ENCODE measurements at regions of chr7 and their contacts with region 1.

Region 1: GRCh38 chr7:106461993-106462859 is 177.4 kb upstream of the NAMPT start:
- DNase-seq: no peak
- ATAC-seq: peak; percentile 67
- H3K4me3 ChIP-seq: no peak overlapping the region
- H3K27ac ChIP-seq: no peak overlapping the region
- H3K4me1 ChIP-seq: peaks cover 11 to 26% of the 10 kb centered on the region in 2 experiments; a peak in 3 of 4 replicates
- H3K27me3 ChIP-seq: no peaks in the 10 kb centered on the region
- CTCF ChIP-seq: peak; percentile 32 to 77 (median 60); a peak in 4 of 6 replicates
- POLR2A ChIP-seq: no peak
- RAD21 ChIP-seq: peak; percentile 84

Region 2: GRCh38 chr7:106285051-106285854 is 177.0 kb before region 1 on chr7:
- CTCF ChIA-PET with region 1: interaction called, 3 read pairs
- POLR2A ChIA-PET with region 1: interaction called, 5 read pairs
- RAD21 ChIA-PET with region 1: interaction called in 1 of 2 experiments, 4 read pairs
- intact Hi-C with region 1: loop called (anchors 5 kb)
- DNase-seq: peak; percentile 96
- ATAC-seq: peak; percentile 88
- H3K4me3 ChIP-seq: peak overlapping the region; percentile 77 to 83
- H3K27ac ChIP-seq: peak overlapping the region; percentile 80
- H3K4me1 ChIP-seq: peaks cover 13 to 45% of the 10 kb centered on the region in 2 experiments; a peak in 3 of 4 replicates
- H3K27me3 ChIP-seq: no peaks in the 10 kb centered on the region
- CTCF ChIP-seq: no peak
- POLR2A ChIP-seq: peak; percentile 70
- RAD21 ChIP-seq: 0 out of 2 replicates have a peak, but pooled peaks have one; percentile 13

Region 3: DNA sequence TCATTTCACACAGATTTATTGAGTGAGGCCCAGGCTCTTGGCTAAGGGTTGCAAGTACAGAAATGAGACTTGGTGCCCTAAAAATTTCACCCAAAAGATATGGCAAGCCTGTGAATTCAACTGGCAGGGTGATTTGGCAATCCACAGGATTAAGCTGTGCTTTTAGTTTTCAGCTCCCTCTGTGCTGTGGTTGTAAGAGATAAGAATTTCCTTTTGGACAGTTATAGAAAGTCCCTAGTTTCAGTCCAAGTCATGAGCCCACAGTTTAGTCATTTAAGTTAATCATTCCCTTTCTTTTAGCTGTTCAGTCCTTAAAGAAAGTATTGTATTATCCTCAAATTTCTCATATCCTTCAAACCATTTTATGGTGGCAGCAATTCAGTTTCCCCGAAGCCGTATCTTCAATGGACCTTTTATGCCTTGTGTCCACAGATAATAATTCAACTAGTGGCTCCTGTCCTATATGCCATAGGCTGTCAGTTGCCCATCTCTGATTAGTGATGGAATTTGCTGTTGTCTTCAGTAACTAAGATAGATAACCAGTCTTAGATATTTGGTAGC is 104.0 kb before region 1 on chr7:
- CTCF ChIA-PET with region 1: no interaction called
- POLR2A ChIA-PET with region 1: no interaction called
- RAD21 ChIA-PET with region 1: no interaction called
- intact Hi-C with region 1: no loop called
- DNase-seq: no peak
- ATAC-seq: no peak
- H3K4me3 ChIP-seq: no peak overlapping the region
- H3K27ac ChIP-seq: no peak overlapping the region
- H3K4me1 ChIP-seq: no peaks in the 10 kb centered on the region
- H3K27me3 ChIP-seq: no peaks in the 10 kb centered on the region
- CTCF ChIP-seq: no peak
- POLR2A ChIP-seq: no peak
- RAD21 ChIP-seq: no peak

Region 4: GRCh38 chr7:106736508-106737201 is 274.4 kb after region 1 on chr7:
- CTCF ChIA-PET with region 1: interaction called, 16 read pairs
- POLR2A ChIA-PET with region 1: no interaction called
- RAD21 ChIA-PET with region 1: interaction called in 1 of 2 experiments, 6 read pairs
- intact Hi-C with region 1: loop called (anchors 5 kb)
- DNase-seq: peak; percentile 73
- ATAC-seq: peak; percentile 98
- H3K4me3 ChIP-seq: peak overlapping the region in 1 of 2 experiments; percentile 17; a peak in 1 of 4 replicates
- H3K27ac ChIP-seq: peak overlapping the region; percentile 30
- H3K4me1 ChIP-seq: peaks cover 0 to 12% of the 10 kb centered on the region in 2 experiments; a peak in 2 of 4 replicates
- H3K27me3 ChIP-seq: no peaks in the 10 kb centered on the region
- CTCF ChIP-seq: peak; percentile 71 to 97 (median 82)
- POLR2A ChIP-seq: no peak
- RAD21 ChIP-seq: peak; percentile 95